Activated CD4-positive, alpha-beta memory T cell treated with anti-CD3 and anti-CD28 coated beads for 36 hours (primary cell): ENCODE measurements at regions of chr14 and their contacts with region 1.

Region 1: DNA sequence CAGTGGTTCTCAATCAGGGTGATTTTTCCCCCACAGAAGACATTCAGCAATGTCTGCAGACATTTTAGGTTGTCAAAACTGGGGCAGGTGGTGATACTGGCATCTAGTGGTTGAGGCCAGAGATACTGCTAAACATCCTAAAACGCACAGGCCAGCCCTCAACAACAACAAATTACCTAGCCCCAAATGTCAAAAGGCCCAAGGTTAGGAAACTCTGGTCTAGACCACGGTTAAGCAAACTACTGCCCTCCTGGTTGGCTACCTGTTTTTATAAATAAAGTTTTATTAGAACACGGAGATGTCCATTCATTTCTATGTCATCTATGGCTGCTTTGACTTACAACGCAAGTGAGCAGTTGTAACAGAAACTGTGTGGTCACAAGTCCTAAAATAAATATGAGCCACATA is 186.7 kb downstream of the EFCAB11 start:
- DNase-seq: peak; percentile 75
- H3K4me3 Mint-ChIP-seq: no peak overlapping the region
- H3K27ac Mint-ChIP-seq: peak overlapping the region; percentile 39
- H3K4me1 Mint-ChIP-seq: peaks cover 18% of the 10 kb centered on the region
- H3K27me3 Mint-ChIP-seq: peaks cover 2% of the 10 kb centered on the region

Region 2: DNA sequence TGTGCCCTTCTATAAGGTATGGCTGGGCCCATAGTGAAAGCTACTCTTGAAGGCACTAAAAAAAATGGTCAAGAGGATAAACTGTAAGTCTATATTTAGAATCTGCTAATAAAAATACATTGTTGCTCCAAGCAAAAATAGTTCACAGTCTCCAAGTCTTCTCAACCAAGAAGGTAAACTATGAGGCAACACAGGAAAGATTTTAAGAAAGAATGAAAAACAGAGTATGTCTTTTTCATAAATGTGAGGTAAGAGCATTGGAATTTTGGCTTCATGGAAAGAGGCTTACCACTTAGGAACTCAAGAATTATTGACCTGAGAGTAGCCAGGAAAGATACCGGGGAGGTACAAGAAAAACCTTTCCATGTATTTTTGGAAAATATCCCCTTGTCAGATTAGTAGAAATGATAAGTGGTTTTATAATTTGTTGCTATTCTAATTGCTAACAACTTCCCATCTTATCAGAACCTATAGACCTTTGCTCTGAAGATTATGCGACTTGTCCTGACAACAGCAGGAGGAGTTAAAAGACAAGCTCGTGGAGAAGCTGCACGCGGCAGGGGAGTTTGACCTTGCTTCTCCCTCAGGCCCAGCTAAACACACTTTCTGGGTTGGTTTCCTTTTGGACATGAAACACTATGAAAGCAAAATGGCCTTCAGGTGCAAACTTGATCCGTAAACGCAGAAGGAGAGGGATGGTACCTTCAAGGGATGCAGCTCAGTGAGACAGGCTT is 588.9 kb before region 1 on chr14:
- CTCF ChIA-PET with region 1: interaction called, 4 read pairs
- POLR2A ChIA-PET with region 1: no interaction called
- intact Hi-C with region 1: loop called (anchors 1 kb)
- DNase-seq: no peak
- H3K4me3 Mint-ChIP-seq: no peak overlapping the region
- H3K27ac Mint-ChIP-seq: no peak overlapping the region
- H3K4me1 Mint-ChIP-seq: peaks cover 8% of the 10 kb centered on the region
- H3K27me3 Mint-ChIP-seq: no peaks in the 10 kb centered on the region

Region 3: GRCh38 chr14:89757313-89757939 is 10.4 kb before region 1 on chr14:
- CTCF ChIA-PET with region 1: no interaction called
- POLR2A ChIA-PET with region 1: no interaction called
- intact Hi-C with region 1: no loop called
- DNase-seq: no peak
- H3K4me3 Mint-ChIP-seq: no peak overlapping the region
- H3K27ac Mint-ChIP-seq: no peak overlapping the region
- H3K4me1 Mint-ChIP-seq: peaks cover 13% of the 10 kb centered on the region
- H3K27me3 Mint-ChIP-seq: no peaks in the 10 kb centered on the region